ENCODE measurements at regions of chr4 and their contacts with region 1.

Region 1: GRCh38 chr4:189436207-189436606 is 504.5 kb upstream of the FRG1 start:
- DNase-seq: peak; percentile 6
- ATAC-seq: peak; percentile 64
- H3K4me3 ChIP-seq: no peak overlapping the region
- H3K27ac ChIP-seq: no peak overlapping the region
- H3K4me1 ChIP-seq: no peaks in the 10 kb centered on the region
- H3K27me3 ChIP-seq: peaks cover 0 to 6% of the 10 kb centered on the region in 2 experiments; a peak in 2 of 5 replicates
- CTCF ChIP-seq: peak; percentile 36; the same call in 1 of the 2 replicates
- EP300 ChIP-seq: no peak
- POLR2A ChIP-seq: no peak
- RAD21 ChIP-seq: no peak

Region 2: GRCh38 chr4:189792924-189793618 is 356.9 kb after region 1 on chr4:
- CTCF ChIA-PET with region 1: interaction called, 20 read pairs
- POLR2A ChIA-PET with region 1: no interaction called
- in situ Hi-C with region 1: loop called (anchors 10 kb)
- intact Hi-C with region 1: no loop called
- DNase-seq: peak; percentile 39
- ATAC-seq: peak; percentile 97
- H3K4me3 ChIP-seq: no peak overlapping the region
- H3K27ac ChIP-seq: no peak overlapping the region
- H3K4me1 ChIP-seq: no peaks in the 10 kb centered on the region
- H3K27me3 ChIP-seq: peaks cover 1 to 4% of the 10 kb centered on the region in 2 experiments; a peak in 2 of 5 replicates
- CTCF ChIP-seq: peak; percentile 95
- EP300 ChIP-seq: no peak
- POLR2A ChIP-seq: no peak
- RAD21 ChIP-seq: peak; percentile 78

Region 3: DNA sequence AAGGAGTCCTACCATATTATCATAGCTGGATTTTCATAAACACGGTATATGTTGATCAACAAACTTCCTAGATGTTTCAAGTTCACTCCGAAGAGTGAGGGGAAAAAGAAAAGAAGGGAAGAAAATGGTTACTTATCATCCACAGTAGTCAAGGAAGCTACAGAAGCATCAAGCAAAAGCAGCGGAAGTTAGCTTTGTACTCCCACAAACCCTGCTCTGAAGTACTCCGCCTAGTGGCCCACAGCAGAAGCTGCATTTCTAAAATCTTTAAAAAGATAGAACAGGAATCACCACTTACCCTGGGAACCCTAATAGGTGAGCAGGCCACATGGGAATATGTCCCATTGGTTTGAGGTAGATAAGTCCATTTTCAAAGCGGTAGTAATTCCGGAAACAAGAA is 476.0 kb after region 1 on chr4:
- CTCF ChIA-PET with region 1: no interaction called
- POLR2A ChIA-PET with region 1: no interaction called
- in situ Hi-C with region 1: loop called (anchors 10 kb)
- intact Hi-C with region 1: no loop called
- DNase-seq: no peak
- ATAC-seq: no peak
- H3K4me3 ChIP-seq: no peak overlapping the region
- H3K27ac ChIP-seq: no peak overlapping the region
- H3K4me1 ChIP-seq: no peaks in the 10 kb centered on the region
- H3K27me3 ChIP-seq: no peaks in the 10 kb centered on the region
- CTCF ChIP-seq: peak; percentile 17; the same call in 1 of the 2 replicates
- EP300 ChIP-seq: no peak
- POLR2A ChIP-seq: no peak
- RAD21 ChIP-seq: no peak

Measured in HepG2 (cell line).